ENCODE measurements at regions of chr6 and their contacts with region 1.

Region 1: GRCh38 chr6:7140631-7141378 is 33.0 kb downstream of the RREB1 start:
- DNase-seq: peak; percentile 75 to 81 (median 75)
- H3K4me3 ChIP-seq: peak overlapping the region; percentile 44 to 65
- H3K4me3 Mint-ChIP-seq: peak overlapping the region; percentile 84 to 90 (median 88)
- H3K27ac ChIP-seq: peak overlapping the region; percentile 65
- H3K27ac Mint-ChIP-seq: peak overlapping the region; percentile 78 to 94 (median 87)
- H3K4me1 ChIP-seq: peaks cover 78% of the 10 kb centered on the region
- H3K4me1 Mint-ChIP-seq: peaks cover 47 to 77% (median 59%) of the 10 kb centered on the region in 4 donors
- H3K27me3 ChIP-seq: no peaks in the 10 kb centered on the region
- H3K27me3 Mint-ChIP-seq: no peaks in the 10 kb centered on the region

Region 2: DNA sequence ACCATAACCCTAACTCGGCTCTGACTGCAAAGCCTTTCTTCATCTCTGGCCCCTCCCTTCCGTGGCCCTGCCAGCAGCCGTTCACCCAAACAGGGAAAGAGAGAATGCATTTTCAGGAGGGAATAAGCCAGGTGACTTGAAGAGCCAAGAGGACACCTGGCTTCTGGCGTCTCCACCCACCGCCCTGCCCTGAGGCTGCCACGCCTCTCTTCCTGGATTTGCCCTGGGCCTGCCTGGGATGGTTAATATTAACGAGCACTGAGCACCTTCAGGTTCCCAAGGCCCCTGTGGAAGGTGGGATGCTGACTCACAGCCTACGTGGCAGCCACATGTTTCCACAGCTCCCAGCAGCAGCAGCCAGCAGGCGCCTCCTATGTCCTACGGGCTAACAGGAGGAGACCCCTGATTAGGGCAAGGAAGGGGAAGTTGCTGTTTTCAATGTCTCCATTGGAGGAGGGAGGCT is 171.0 kb before region 1 on chr6:
- CTCF ChIA-PET with region 1: no interaction called
- POLR2A ChIA-PET with region 1: no interaction called
- intact Hi-C with region 1: no loop called
- DNase-seq: no peak
- H3K4me3 ChIP-seq: no peak overlapping the region
- H3K4me3 Mint-ChIP-seq: no peak overlapping the region
- H3K27ac ChIP-seq: no peak overlapping the region
- H3K27ac Mint-ChIP-seq: no peak overlapping the region
- H3K4me1 ChIP-seq: no peaks in the 10 kb centered on the region
- H3K4me1 Mint-ChIP-seq: no peaks in the 10 kb centered on the region
- H3K27me3 ChIP-seq: no peaks in the 10 kb centered on the region
- H3K27me3 Mint-ChIP-seq: peaks cover 0 to 4% of the 10 kb centered on the region in 2 donors

Region 3: DNA sequence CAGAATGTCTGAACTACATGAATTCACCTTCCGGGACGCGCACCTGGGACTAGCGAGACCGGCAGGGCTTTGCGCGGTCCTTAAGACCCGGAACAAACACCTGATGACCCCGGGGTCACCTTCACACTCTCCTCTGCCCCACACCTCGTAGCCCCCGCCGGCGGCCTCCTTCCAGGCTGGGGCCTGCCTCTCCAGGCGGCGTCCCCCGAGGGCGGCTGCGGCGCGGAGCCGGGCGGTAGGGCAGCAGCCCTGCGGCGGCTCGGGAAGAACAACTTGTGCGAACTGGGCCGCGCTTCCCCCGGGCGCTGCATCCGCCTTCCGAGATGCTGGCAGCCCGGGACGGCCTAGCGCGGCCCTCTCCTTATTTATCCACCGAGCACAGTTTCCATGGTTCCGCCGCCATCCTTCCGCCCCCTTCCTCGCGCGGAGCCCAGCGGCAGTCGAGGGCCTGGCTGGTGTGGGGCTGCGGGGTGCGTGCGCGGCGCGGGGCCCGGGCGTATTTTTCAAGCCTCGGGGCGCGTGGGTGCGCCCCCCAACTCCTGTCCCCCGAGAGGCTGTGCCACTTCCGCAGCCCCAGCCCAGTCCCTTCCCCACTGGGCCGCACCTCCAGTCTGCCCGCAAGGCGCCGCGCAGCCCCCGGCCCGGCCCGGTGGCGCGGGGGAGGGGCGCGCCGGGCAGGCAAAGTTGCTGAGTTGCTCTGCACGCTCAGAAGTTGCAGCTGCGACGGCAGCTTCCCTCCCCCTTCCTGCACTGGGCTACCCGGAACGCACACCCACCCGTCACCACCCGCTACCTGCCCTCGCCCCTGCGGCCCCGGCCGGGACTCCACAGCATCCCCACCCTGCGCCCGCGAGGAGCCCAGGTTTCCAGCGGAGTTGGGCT is 89.3 kb before region 1 on chr6:
- CTCF ChIA-PET with region 1: no interaction called
- POLR2A ChIA-PET with region 1: interaction called, 5 read pairs
- intact Hi-C with region 1: loop called (anchors 5 kb)
- DNase-seq: peak; percentile 57 to 69 (median 60)
- H3K4me3 ChIP-seq: peak overlapping the region; percentile 23 to 59
- H3K4me3 Mint-ChIP-seq: peak overlapping the region; percentile 65 to 85 (median 72)
- H3K27ac ChIP-seq: peak overlapping the region; percentile 25
- H3K27ac Mint-ChIP-seq: peak overlapping the region in 2 of 7 donors; percentile 57 to 60
- H3K4me1 ChIP-seq: peaks cover 8% of the 10 kb centered on the region
- H3K4me1 Mint-ChIP-seq: peaks cover 2 to 13% (median 9%) of the 10 kb centered on the region in 4 donors
- H3K27me3 ChIP-seq: no peaks in the 10 kb centered on the region
- H3K27me3 Mint-ChIP-seq: no peaks in the 10 kb centered on the region

Region 4: DNA sequence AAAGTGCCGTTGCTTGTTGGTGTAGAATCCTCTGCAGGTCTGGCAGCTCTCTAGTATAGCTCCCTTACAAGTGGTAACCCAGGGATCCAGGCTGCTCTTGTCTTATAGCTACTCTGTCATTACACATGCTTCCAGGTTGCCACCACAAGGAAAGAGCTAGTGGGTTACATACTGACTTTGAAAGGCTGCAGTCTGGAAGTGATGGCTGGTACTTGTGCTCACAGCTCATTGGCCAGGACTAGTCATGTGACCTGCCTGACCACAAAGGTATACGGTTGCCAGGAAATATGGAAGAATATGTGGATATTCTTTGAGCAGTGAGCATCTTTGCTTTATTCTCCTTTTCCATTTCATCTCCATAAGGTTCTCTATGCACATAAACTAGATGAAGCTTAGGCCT is 13.0 kb after region 1 on chr6:
- CTCF ChIA-PET with region 1: interaction called, 3 read pairs
- POLR2A ChIA-PET with region 1: interaction called, 3 read pairs
- intact Hi-C with region 1: loop called (anchors 2 kb)
- DNase-seq: peak in 1 of 5 donors; percentile 45
- H3K4me3 ChIP-seq: no peak overlapping the region
- H3K4me3 Mint-ChIP-seq: peak overlapping the region in 3 of 8 donors; percentile 4 to 24 (median 18)
- H3K27ac ChIP-seq: no peak overlapping the region
- H3K27ac Mint-ChIP-seq: peak overlapping the region in 6 of 7 donors; percentile 14 to 44 (median 36)
- H3K4me1 ChIP-seq: peaks cover 58% of the 10 kb centered on the region
- H3K4me1 Mint-ChIP-seq: peaks cover 61 to 90% (median 70%) of the 10 kb centered on the region in 4 donors
- H3K27me3 ChIP-seq: no peaks in the 10 kb centered on the region
- H3K27me3 Mint-ChIP-seq: no peaks in the 10 kb centered on the region